CD14-positive monocyte (primary cell): ENCODE measurements at regions of chr3 and their contacts with region 1.

Region 1: DNA sequence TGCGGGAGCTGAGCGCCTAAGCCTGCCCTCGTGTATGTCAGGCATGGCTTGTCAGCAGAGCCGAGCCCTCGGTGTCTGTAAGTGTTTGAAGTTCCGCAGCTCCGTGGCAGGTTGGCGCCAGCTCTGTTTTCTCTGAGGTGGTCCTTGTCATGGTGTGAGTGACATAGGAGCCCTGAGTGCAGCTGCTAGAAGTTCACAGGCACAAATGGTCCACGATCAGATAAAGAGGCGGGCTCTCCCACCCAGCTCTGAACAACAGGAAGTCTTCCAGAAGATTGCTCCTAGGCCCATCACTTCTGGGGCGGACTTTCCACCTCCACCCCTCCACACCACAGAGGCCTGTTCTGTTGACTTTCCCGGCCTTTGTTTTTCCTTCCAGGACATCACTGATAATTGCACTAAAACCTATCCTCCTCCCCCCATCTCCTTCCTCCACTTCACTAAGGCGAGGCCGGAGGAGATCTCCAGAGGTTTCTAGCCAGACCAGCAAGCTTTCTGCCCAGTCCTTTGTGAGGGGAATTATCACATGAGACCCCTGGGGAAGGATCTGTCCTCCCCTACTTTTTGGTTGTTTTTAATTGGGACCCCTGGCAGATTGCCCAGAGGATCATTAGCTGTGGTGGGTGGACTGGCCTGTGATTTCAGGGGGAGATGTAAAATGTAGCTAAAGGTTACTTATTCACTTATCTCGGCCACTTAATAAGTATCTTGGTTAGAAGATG is 19.9 kb downstream of the ITPR1 start:
- DNase-seq: no peak
- H3K4me3 ChIP-seq: no peak overlapping the region
- H3K4me3 Mint-ChIP-seq: no peak overlapping the region
- H3K27ac ChIP-seq: no peak overlapping the region
- H3K27ac Mint-ChIP-seq: peak overlapping the region in 1 of 7 donors; percentile 16
- H3K4me1 ChIP-seq: peaks cover 15 to 16% of the 10 kb centered on the region in 2 donors
- H3K4me1 Mint-ChIP-seq: peaks cover 32% of the 10 kb centered on the region
- H3K27me3 ChIP-seq: no peaks in the 10 kb centered on the region
- H3K27me3 Mint-ChIP-seq: no peaks in the 10 kb centered on the region
- CTCF ChIP-seq: no peak

Region 2: DNA sequence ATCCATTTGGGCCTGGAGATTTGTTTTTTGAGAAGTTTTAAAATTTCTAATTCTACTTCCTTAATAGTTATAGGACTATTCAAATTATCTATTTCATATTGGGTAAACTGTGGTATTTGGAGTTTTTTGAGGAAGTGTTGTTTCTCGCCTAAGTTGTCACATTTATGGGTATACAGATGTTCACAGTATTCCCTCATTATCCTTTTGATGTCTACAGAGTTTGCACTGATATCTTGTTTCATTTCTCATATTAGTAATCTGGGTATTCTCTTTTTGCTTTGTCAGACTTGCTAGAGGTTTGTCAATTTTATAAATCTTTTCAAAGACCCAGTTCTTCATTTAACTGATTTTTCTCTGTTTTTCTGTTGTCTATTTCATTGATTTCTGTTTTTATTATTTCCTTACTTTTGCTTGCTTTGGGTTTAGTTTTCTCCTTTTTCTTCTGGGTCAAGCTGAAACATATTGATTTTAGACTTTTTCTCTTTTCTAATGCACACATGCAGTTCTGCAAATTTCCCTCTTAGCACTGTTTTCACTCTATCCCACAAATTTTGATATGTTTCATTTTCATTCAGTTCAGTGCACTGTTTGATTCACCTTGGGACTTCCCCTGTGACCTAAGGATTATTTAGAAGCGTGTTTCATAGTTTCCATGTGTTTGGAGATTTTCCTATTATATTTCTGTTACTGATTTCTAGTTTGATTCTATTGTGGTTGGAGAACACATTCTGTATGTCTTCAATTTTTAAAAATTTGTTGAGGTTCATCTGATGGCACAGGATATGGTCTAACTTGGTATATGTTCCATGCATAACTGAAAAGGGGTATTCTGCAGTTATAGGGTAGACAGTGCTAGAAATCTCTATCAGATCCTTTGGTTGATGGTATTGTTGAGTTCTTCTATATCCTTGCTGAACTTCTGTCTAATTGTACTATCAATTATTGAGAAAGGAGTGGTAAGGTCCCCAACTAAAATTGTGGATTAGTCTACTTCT is 125.5 kb before region 1 on chr3:
- intact Hi-C with region 1: no loop called
- DNase-seq: no peak
- H3K4me3 ChIP-seq: no peak overlapping the region
- H3K4me3 Mint-ChIP-seq: no peak overlapping the region
- H3K27ac ChIP-seq: no peak overlapping the region
- H3K27ac Mint-ChIP-seq: peak overlapping the region in 1 of 7 donors; percentile 53
- H3K4me1 ChIP-seq: no peaks in the 10 kb centered on the region
- H3K4me1 Mint-ChIP-seq: peaks cover 9% of the 10 kb centered on the region
- H3K27me3 ChIP-seq: no peaks in the 10 kb centered on the region
- H3K27me3 Mint-ChIP-seq: no peaks in the 10 kb centered on the region
- CTCF ChIP-seq: no peak

Region 3: GRCh38 chr3:4466741-4467521 is 46.1 kb before region 1 on chr3 and contains the start of gene SUMF1:
- intact Hi-C with region 1: loop called in 1 of 2 experiments (anchors 10 kb)
- DNase-seq: peak; percentile 46 to 64 (median 62)
- H3K4me3 ChIP-seq: peak within 1 kb of the TSS; percentile 75 to 92 (median 90)
- H3K4me3 Mint-ChIP-seq: peak within 1 kb of the TSS; percentile 93
- H3K27ac ChIP-seq: peak within 1 kb of the TSS; percentile 86 to 95
- H3K27ac Mint-ChIP-seq: peak within 1 kb of the TSS; percentile 93 to 98 (median 95)
- H3K4me1 ChIP-seq: peaks cover 28 to 36% of the 10 kb centered on the region in 2 donors
- H3K4me1 Mint-ChIP-seq: peaks cover 45% of the 10 kb centered on the region
- H3K27me3 ChIP-seq: no peaks in the 10 kb centered on the region
- H3K27me3 Mint-ChIP-seq: no peaks in the 10 kb centered on the region
- CTCF ChIP-seq: no peak
- polyA plus RNA-seq, gene SUMF1: 25.7 to 80.4 (median 74.2) TPM

Region 4: DNA sequence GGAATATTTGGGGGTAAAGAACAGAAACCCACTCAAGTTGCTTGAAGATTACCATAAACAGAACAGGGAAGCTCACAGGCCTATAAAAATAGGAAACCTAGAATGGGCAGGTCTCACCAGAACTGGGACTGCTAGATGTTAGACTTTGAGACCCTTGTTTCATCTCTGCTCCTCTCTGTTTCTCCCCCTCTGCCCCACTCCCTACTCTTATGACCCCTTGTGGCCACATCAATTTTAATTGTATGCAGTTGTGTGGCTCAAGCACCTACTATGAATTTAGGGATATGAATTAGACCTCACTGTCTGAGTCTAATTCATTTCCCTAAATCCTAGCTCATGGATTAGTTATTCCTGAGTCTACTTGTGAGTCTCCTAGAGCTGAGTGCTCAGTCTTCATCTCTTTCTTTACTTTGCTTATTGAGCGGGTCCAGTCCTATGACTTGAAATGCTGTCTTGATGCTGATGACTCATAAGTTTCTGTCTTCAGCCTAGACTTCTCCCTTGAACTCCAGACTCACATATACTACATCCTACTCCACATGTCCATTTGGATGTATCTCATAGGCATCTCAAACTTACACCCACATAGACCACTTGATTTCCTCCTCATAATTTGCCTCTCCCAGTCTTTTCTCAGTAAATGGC is 58.8 kb after region 1 on chr3:
- intact Hi-C with region 1: loop called in 1 of 2 experiments (anchors 10 kb)
- DNase-seq: peak; percentile 25 to 48 (median 36)
- H3K4me3 ChIP-seq: no peak overlapping the region
- H3K4me3 Mint-ChIP-seq: no peak overlapping the region
- H3K27ac ChIP-seq: peak overlapping the region in 1 of 2 donors; percentile 3
- H3K27ac Mint-ChIP-seq: peak overlapping the region in 3 of 7 donors; percentile 23 to 63 (median 27)
- H3K4me1 ChIP-seq: peaks cover 0 to 6% of the 10 kb centered on the region in 2 donors
- H3K4me1 Mint-ChIP-seq: peaks cover 12% of the 10 kb centered on the region
- H3K27me3 ChIP-seq: no peaks in the 10 kb centered on the region
- H3K27me3 Mint-ChIP-seq: no peaks in the 10 kb centered on the region
- CTCF ChIP-seq: peak; percentile 22

Region 5: GRCh38 chr3:4584456-4585249 is 71.6 kb after region 1 on chr3:
- intact Hi-C with region 1: loop called (anchors 5 to 10 kb)
- DNase-seq: peak; percentile 16 to 19 (median 18)
- H3K4me3 ChIP-seq: peak overlapping the region; percentile 6 to 79 (median 66)
- H3K4me3 Mint-ChIP-seq: peak overlapping the region; percentile 80 to 99
- H3K27ac ChIP-seq: peak overlapping the region; percentile 1 to 72
- H3K27ac Mint-ChIP-seq: peak overlapping the region; percentile 77 to 94 (median 89)
- H3K4me1 ChIP-seq: peaks cover 42 to 58% of the 10 kb centered on the region in 2 donors
- H3K4me1 Mint-ChIP-seq: peaks cover 80% of the 10 kb centered on the region
- H3K27me3 ChIP-seq: no peaks in the 10 kb centered on the region
- H3K27me3 Mint-ChIP-seq: no peaks in the 10 kb centered on the region
- CTCF ChIP-seq: no peak

Region 6: GRCh38 chr3:5388091-5388490 is 875.0 kb after region 1 on chr3:
- intact Hi-C with region 1: no loop called
- DNase-seq: no peak
- H3K4me3 ChIP-seq: no peak overlapping the region
- H3K4me3 Mint-ChIP-seq: no peak overlapping the region
- H3K27ac ChIP-seq: no peak overlapping the region
- H3K27ac Mint-ChIP-seq: no peak overlapping the region
- H3K4me1 ChIP-seq: peaks cover 7 to 16% of the 10 kb centered on the region in 2 donors
- H3K4me1 Mint-ChIP-seq: peaks cover 20% of the 10 kb centered on the region
- H3K27me3 ChIP-seq: no peaks in the 10 kb centered on the region
- H3K27me3 Mint-ChIP-seq: peaks cover 0 to 2% (median 0%) of the 10 kb centered on the region in 3 donors
- CTCF ChIP-seq: no peak